Astrocyte of the cerebellum (primary cell): ENCODE measurements at regions of chr14 and their contacts with region 1.

Region 1: DNA sequence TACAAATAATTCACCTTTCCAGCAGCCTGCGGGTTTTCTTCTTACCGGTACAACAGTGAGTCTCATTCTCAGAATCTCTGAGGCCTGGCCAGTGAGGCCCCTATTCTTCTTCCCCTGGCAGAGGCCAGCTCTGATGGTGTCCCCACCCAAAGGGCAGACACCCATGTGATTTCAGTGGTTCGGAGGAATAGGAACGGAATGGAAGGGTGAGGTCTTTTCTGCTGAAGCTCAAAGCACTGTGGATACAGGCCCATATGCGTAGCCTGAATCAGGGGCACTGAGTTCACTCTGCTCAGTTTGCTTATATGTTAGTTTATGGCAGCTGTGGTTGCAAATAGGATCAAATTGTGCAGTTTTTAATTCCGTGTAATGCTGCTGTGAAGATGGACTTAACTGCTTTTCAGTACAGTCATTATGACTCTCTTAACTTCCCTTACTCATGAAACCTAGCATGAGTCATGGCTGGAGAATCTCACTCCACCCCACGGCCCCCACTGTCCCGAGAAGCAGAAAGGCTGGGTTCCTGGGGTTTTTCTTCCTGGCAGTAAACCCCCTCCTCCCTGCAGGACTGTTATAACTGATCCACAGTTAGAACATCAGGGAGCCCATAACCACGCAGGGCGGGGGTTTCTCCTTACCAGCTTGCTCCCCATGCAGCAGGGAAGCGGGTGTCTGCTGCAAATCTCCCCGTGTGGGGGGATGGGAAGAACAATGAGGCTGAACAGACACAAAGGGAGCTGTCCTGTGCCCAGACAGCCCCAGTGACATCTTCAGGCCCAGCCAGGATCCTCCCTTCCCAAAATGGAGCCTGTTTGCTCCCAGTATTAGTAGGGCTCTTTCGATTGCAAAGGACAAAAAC is 122.7 kb downstream of the SLC38A6 start:
- DNase-seq: peak; percentile 94
- H3K4me3 ChIP-seq: no peak overlapping the region
- CTCF ChIP-seq: no peak

Region 2: DNA sequence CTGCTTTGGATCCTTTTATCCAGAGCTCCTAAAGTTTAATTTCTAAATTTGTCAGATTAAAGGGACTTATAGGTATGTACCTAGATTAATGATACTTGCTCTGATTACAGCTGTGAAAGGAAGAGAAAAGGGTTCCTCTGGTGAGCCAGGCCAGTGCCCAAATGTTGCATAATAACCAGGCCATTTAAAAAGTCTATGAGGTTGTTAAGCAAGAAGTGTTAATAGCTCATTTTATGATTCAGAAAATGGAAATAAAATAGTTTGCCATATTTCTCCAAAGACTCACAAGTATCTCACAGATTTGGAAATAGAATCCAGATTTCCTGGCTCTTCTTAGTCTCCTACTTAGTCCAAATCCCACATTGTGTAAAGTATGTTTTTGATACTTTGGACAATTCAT is 55.1 kb before region 1 on chr14:
- in situ Hi-C with region 1: loop called (anchors 10 kb)
- DNase-seq: no peak
- H3K4me3 ChIP-seq: no peak overlapping the region
- CTCF ChIP-seq: no peak

Region 3: GRCh38 chr14:61147831-61148549 is 44.3 kb after region 1 on chr14:
- in situ Hi-C with region 1: no loop called
- DNase-seq: peak; percentile 100
- H3K4me3 ChIP-seq: no peak overlapping the region
- CTCF ChIP-seq: no peak